Upper lobe of right lung (tissue), 1 donor: ENCODE measurements at regions of chr4 and their contacts with region 1.

Region 1: DNA sequence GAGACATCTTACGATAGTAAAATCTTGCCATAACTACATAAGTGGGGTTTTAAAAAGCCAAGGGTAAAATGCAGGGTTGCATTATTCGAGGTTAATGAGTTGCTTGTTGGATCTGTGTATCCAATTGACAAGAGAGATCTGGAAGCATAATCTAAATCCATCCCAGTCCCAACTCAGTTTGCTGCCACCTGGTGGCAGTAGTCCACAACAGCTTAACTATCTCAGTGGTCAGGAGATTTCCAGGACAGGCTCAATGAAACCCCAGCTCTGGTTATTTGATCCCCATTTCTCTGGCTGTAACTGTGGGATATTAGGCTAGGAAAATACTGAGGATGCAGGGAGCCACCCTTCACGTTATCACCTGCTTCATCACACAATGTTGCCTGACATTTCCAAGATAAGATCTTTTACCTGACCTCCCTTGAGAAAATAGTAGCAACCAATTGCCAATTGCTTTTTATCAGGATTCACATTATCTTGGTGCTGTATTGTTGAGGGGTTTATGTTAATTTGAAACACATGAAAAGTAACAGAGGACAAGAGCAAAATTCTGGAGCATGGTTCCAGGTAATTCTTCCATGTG is 88.2 kb upstream of the TNIP3 start:
- DNase-seq: peak; percentile 70
- ATAC-seq: peak; percentile 91
- H3K4me3 ChIP-seq: no peak overlapping the region
- H3K27ac ChIP-seq: no peak overlapping the region
- H3K4me1 ChIP-seq: peaks cover 9% of the 10 kb centered on the region
- H3K27me3 ChIP-seq: no peaks in the 10 kb centered on the region
- CTCF ChIP-seq: peak; percentile 85

Region 2: GRCh38 chr4:121192480-121192879 is 59.8 kb before region 1 on chr4:
- intact Hi-C with region 1: loop called (anchors 10 kb)
- DNase-seq: no peak
- ATAC-seq: peak; percentile 83
- H3K4me3 ChIP-seq: peak overlapping the region; percentile 31
- H3K27ac ChIP-seq: no peak overlapping the region
- H3K4me1 ChIP-seq: no peaks in the 10 kb centered on the region
- H3K27me3 ChIP-seq: no peaks in the 10 kb centered on the region
- CTCF ChIP-seq: peak; percentile 83

Region 3: GRCh38 chr4:121330180-121330665 is 77.9 kb after region 1 on chr4:
- intact Hi-C with region 1: no loop called
- DNase-seq: no peak
- ATAC-seq: no peak
- H3K4me3 ChIP-seq: no peak overlapping the region
- H3K27ac ChIP-seq: no peak overlapping the region
- H3K4me1 ChIP-seq: no peaks in the 10 kb centered on the region
- H3K27me3 ChIP-seq: no peaks in the 10 kb centered on the region
- CTCF ChIP-seq: no peak

Region 4: GRCh38 chr4:121448231-121448630 is 195.9 kb after region 1 on chr4:
- intact Hi-C with region 1: no loop called
- DNase-seq: no peak
- ATAC-seq: no peak
- H3K4me3 ChIP-seq: no peak overlapping the region
- H3K27ac ChIP-seq: no peak overlapping the region
- H3K4me1 ChIP-seq: no peaks in the 10 kb centered on the region
- H3K27me3 ChIP-seq: no peaks in the 10 kb centered on the region
- CTCF ChIP-seq: no peak